ENCODE measurements at regions of chr18 and their contacts with region 1.

Region 1: GRCh38 chr18:6920099-6920899 is 190.8 kb downstream of the ARHGAP28 start:
- DNase-seq: peak; percentile 45 to 85 (median 62)
- ATAC-seq: peak; percentile 88 to 94 (median 93)
- H3K4me3 ChIP-seq: no peak overlapping the region
- H3K27ac ChIP-seq: no peak overlapping the region
- H3K4me1 ChIP-seq: no peaks in the 10 kb centered on the region
- H3K27me3 ChIP-seq: no peaks in the 10 kb centered on the region
- CTCF ChIP-seq: peak in 3 of 4 donors; percentile 35 to 52 (median 39)

Region 2: GRCh38 chr18:6773777-6774176 is 146.5 kb before region 1 on chr18:
- intact Hi-C with region 1: no loop called
- DNase-seq: no peak
- ATAC-seq: no peak
- H3K4me3 ChIP-seq: no peak overlapping the region
- H3K27ac ChIP-seq: no peak overlapping the region
- H3K4me1 ChIP-seq: no peaks in the 10 kb centered on the region
- H3K27me3 ChIP-seq: no peaks in the 10 kb centered on the region
- CTCF ChIP-seq: no peak

Region 3: GRCh38 chr18:6983366-6983765 is 63.1 kb after region 1 on chr18:
- intact Hi-C with region 1: no loop called
- DNase-seq: peak in 1 of 6 donors; percentile 41
- ATAC-seq: peak in 3 of 4 donors; percentile 60 to 84 (median 73)
- H3K4me3 ChIP-seq: no peak overlapping the region
- H3K27ac ChIP-seq: no peak overlapping the region
- H3K4me1 ChIP-seq: no peaks in the 10 kb centered on the region
- H3K27me3 ChIP-seq: no peaks in the 10 kb centered on the region
- CTCF ChIP-seq: no peak

Region 4: GRCh38 chr18:6994771-6995435 is 74.6 kb after region 1 on chr18:
- intact Hi-C with region 1: loop called in 2 of 3 experiments (anchors 5 to 10 kb)
- DNase-seq: no peak
- ATAC-seq: peak in 1 of 4 donors; percentile 68
- H3K4me3 ChIP-seq: no peak overlapping the region
- H3K27ac ChIP-seq: no peak overlapping the region
- H3K4me1 ChIP-seq: no peaks in the 10 kb centered on the region
- H3K27me3 ChIP-seq: no peaks in the 10 kb centered on the region
- CTCF ChIP-seq: no peak

Region 5: GRCh38 chr18:7000484-7001096 is 80.3 kb after region 1 on chr18:
- intact Hi-C with region 1: loop called in 2 of 3 experiments (anchors 5 to 10 kb)
- DNase-seq: peak in 1 of 6 donors; percentile 27
- ATAC-seq: peak; percentile 46 to 76 (median 68)
- H3K4me3 ChIP-seq: no peak overlapping the region
- H3K27ac ChIP-seq: peak overlapping the region in 1 of 4 donors; percentile 21
- H3K4me1 ChIP-seq: peaks cover 0 to 5% (median 0%) of the 10 kb centered on the region in 3 donors
- H3K27me3 ChIP-seq: no peaks in the 10 kb centered on the region
- CTCF ChIP-seq: peak; percentile 9 to 48 (median 37)

Region 6: GRCh38 chr18:7021994-7022840 is 101.9 kb after region 1 on chr18:
- intact Hi-C with region 1: loop called in 1 of 3 experiments (anchors 5 kb)
- DNase-seq: peak in 4 of 6 donors; percentile 68 to 84 (median 77)
- ATAC-seq: peak; percentile 89 to 99 (median 98)
- H3K4me3 ChIP-seq: peak overlapping the region in 1 of 4 donors; percentile 27
- H3K27ac ChIP-seq: peak overlapping the region in 1 of 4 donors; percentile 41
- H3K4me1 ChIP-seq: peaks cover 0 to 3% (median 0%) of the 10 kb centered on the region in 3 donors
- H3K27me3 ChIP-seq: no peaks in the 10 kb centered on the region
- CTCF ChIP-seq: peak in 3 of 4 donors; percentile 38 to 70 (median 45)

Region 7: GRCh38 chr18:7177116-7177744 is 256.9 kb after region 1 on chr18:
- intact Hi-C with region 1: loop called in 2 of 3 experiments (anchors 5 to 10 kb)
- DNase-seq: peak in 3 of 6 donors; percentile 23 to 46 (median 31)
- ATAC-seq: peak in 3 of 4 donors; percentile 91 to 95 (median 93)
- H3K4me3 ChIP-seq: no peak overlapping the region
- H3K27ac ChIP-seq: no peak overlapping the region
- H3K4me1 ChIP-seq: no peaks in the 10 kb centered on the region
- H3K27me3 ChIP-seq: no peaks in the 10 kb centered on the region
- CTCF ChIP-seq: peak; percentile 25 to 63 (median 42)

Region 8: GRCh38 chr18:7207366-7207915 is 287.1 kb after region 1 on chr18:
- intact Hi-C with region 1: no loop called
- DNase-seq: no peak
- ATAC-seq: peak in 1 of 4 donors; percentile 18
- H3K4me3 ChIP-seq: no peak overlapping the region
- H3K27ac ChIP-seq: no peak overlapping the region
- H3K4me1 ChIP-seq: no peaks in the 10 kb centered on the region
- H3K27me3 ChIP-seq: no peaks in the 10 kb centered on the region
- CTCF ChIP-seq: no peak